Sciatic nerve (tissue), 2 donors: ENCODE measurements at regions of chr12 and their contacts with region 1.

Region 1: DNA sequence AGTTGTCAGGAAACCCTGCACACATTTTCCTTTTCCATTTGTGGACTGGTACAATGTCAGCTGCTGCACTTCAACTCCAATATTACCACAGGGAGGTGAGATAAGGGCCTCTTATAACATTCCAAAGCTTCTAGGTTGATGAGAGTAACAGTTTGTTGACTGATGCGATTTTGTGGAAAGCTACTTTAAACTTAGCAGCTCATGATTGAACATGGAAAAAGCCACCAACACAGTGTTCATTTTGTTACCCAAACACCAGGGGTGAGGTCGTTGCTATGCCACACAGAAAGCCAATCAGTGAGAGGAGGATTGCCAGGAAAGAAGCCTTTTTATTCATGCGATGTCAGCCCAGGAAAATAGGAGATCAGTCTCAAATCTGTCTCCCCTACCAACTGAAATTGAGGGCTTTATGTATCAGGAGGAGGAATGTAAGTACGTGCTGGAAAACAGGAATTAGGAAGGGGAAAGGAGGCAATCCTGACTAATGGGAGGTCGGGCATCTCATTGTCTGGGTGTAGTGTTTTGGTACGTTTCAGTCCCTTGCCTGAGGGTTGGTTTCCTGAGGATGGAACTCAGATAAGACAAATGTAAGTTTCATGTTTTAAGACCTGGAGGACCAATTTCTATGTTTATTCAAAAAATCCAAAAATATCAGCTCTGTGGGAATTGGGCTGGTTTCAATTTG is 92.7 kb upstream of the PLEKHA5 start:
- DNase-seq: no peak
- ATAC-seq: no peak

Region 2: GRCh38 chr12:17954788-17955187 is 1082.0 kb before region 1 on chr12:
- intact Hi-C with region 1: no loop called
- DNase-seq: no peak
- ATAC-seq: no peak

Region 3: DNA sequence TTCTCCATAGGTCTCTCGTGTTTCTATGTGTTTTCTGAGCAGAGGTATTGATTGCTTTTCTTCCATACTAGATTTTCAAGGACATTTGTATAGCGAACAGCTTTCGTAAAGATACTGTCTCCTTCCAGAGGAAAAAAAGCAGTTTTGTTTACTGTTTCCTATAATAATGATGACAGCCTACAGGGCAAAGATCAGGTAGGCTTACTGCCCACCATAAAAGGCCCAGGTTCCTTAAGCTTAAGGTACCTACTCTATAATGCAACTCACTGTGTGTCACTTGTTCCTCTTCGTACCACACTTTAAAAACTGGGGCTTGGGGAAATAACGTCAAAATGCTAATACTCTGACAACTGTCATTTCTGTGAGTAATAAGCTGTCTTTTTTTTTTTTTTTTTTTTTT is 305.7 kb before region 1 on chr12:
- intact Hi-C with region 1: no loop called
- DNase-seq: no peak
- ATAC-seq: no peak

Region 4: DNA sequence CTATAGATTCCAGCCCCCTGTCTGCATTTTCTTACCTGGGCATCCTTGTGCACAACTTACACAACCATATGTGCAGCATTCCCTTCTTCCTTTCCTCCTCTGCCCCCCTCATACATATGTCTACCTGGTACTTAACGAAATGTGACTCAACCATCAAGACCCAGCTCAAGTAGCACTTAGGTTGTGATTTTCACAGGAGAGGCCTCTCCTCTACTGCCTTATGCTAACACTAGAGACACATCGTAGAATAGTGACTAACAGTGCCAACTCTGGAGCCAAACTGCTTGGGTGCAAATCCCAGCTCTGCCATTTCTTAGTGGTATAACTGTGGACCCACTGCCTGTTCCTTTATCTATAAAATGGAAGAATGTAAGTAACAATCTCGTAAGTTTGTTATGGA is 68.6 kb after region 1 on chr12:
- intact Hi-C with region 1: loop called (anchors 2 kb)
- DNase-seq: no peak
- ATAC-seq: no peak